Activated naive CD4-positive, alpha-beta T cell treated with anti-CD3 and anti-CD28 coated beads for 36 hours (primary cell): ENCODE measurements at regions of chr12 and their contacts with region 1.

Region 1: GRCh38 chr12:57124259-57124877 is 3.9 kb upstream of the LRP1 start:
- DNase-seq: peak; percentile 90
- H3K4me3 Mint-ChIP-seq: no peak overlapping the region
- H3K27ac Mint-ChIP-seq: no peak overlapping the region
- H3K4me1 Mint-ChIP-seq: peaks cover under 1% of the 10 kb centered on the region
- H3K27me3 Mint-ChIP-seq: no peaks in the 10 kb centered on the region

Region 2: GRCh38 chr12:56751712-56752598 is 372.4 kb before region 1 on chr12 and contains the start of gene PRIM1:
- CTCF ChIA-PET with region 1: no interaction called
- intact Hi-C with region 1: loop called (anchors 1 kb)
- DNase-seq: peak; percentile 90
- H3K4me3 Mint-ChIP-seq: peak within 1 kb of the TSS; percentile 98
- H3K27ac Mint-ChIP-seq: peak within 1 kb of the TSS; percentile 99
- H3K4me1 Mint-ChIP-seq: peaks cover 40% of the 10 kb centered on the region
- H3K27me3 Mint-ChIP-seq: no peaks in the 10 kb centered on the region
- total RNA-seq, gene PRIM1: 74.9 to 75.0 TPM

Region 3: DNA sequence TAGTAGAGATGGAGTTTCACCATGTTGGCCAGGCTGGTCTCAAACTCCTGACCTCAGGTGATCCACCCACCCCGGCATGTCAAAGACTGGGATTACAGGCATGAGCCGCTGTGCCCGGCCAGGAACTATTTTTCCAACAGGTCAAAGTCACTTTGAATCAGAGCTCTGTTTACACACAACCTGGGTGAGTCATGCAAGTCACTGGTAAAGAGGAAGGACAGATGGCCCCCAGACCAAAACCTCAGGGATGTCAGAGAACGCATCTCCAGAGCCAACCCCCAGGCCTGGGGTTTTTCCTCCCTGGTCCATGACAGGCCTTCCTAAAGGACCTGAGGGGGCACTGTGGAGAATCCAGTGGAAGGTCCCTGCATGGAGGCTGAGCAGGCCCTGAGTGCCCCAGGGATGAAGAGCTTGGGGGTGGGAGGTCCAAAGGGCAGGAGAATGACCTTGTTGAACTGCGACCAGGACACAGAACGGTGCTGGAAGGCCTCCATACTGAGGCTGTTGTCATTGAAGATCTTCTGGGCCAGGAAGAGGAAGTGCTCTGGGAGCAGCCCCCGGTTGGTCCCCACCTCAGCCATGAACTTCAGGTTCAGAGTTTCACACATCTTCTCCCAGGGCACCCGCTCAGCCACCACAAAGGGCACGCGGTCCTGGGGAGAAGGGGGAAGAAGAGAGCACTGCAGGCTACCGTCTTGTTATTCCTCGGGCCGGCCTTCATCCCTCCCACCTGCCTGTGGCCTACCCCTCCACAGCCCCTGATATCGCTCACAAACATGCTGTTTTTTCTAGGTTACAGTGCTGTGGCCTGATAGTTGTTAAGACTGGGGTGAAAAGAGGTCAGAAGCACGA is 22.3 kb before region 1 on chr12:
- CTCF ChIA-PET with region 1: interaction called, 10 read pairs
- intact Hi-C with region 1: no loop called
- DNase-seq: no peak
- H3K4me3 Mint-ChIP-seq: no peak overlapping the region
- H3K27ac Mint-ChIP-seq: peak overlapping the region; percentile 71
- H3K4me1 Mint-ChIP-seq: peaks cover 44% of the 10 kb centered on the region
- H3K27me3 Mint-ChIP-seq: no peaks in the 10 kb centered on the region

Region 4: GRCh38 chr12:57166971-57167371 is 42.6 kb after region 1 on chr12:
- CTCF ChIA-PET with region 1: interaction called, 252 read pairs
- intact Hi-C with region 1: loop called (anchors 1 kb)
- DNase-seq: peak; percentile 85
- H3K4me3 Mint-ChIP-seq: no peak overlapping the region
- H3K27ac Mint-ChIP-seq: peak overlapping the region; percentile 62
- H3K4me1 Mint-ChIP-seq: peaks cover 13% of the 10 kb centered on the region
- H3K27me3 Mint-ChIP-seq: no peaks in the 10 kb centered on the region

Region 5: DNA sequence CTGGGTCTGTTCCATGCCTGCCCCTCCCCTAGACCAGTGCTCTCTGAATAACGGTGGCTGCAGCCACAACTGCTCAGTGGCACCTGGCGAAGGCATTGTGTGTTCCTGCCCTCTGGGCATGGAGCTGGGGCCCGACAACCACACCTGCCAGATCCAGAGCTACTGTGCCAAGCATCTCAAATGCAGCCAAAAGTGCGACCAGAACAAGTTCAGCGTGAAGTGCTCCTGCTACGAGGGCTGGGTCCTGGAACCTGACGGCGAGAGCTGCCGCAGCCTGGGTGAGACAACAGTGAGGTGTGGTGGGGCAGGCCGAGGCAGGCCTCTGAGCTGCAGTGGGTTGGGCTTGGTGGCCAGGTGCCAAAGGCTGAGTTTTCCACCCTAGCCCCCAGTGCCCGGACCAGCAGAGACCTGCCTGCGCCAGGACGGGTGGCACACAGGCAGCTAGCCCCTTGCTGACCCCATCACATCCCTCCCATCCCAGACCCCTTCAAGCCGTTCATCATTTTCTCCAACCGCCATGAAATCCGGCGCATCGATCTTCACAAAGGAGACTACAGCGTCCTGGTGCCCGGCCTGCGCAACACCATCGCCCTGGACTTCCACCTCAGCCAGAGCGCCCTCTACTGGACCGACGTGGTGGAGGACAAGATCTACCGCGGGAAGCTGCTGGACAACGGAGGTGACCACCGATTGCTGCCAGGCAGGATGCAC is 51.2 kb after region 1 on chr12:
- CTCF ChIA-PET with region 1: interaction called, 252 read pairs
- intact Hi-C with region 1: loop called (anchors 1 kb)
- DNase-seq: peak; percentile 70
- H3K4me3 Mint-ChIP-seq: peak overlapping the region; percentile 6
- H3K27ac Mint-ChIP-seq: no peak overlapping the region
- H3K4me1 Mint-ChIP-seq: no peaks in the 10 kb centered on the region
- H3K27me3 Mint-ChIP-seq: no peaks in the 10 kb centered on the region

Region 6: DNA sequence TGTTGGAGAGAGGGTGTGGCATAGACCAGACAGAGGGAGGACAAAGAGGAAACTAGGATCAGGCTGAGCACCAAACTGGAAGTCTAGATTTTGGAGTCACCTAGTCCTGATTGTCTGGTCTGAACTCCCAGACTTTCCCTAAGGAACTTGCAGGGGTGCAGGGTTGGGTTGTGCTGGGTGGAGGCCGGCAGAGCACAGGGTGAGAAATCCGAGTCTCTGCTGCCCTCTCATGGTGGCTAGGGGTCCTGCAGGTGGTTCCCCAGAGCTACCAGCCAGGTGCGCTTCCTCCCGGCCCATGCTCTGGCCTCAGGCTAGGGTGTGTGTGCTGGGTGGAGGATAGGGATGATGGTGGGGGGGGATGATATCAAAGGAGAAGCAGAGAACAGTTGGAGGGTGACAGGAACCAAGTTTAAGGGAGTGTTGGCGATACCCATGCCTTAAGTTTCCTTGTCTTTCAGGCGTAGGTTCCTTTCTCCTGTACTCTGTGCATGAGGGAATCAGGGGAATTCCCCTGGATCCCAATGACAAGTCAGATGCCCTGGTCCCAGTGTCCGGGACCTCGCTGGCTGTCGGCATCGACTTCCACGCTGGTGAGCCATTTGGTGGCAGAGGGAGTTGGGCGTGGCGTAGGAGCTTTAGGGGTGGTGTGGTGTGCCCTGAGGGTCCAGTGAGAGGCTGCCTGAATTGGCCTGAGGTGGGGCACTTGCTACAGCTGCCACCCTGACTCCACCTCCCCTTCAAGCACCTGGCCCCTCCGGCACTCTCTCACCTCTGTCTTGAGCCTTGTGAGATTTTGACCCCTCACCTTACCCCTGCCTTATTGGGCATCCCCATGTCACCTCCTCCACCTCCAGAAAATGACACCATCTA is 58.8 kb after region 1 on chr12:
- CTCF ChIA-PET with region 1: interaction called, 125 read pairs
- intact Hi-C with region 1: loop called (anchors 1 kb)
- DNase-seq: peak; percentile 90
- H3K4me3 Mint-ChIP-seq: no peak overlapping the region
- H3K27ac Mint-ChIP-seq: no peak overlapping the region
- H3K4me1 Mint-ChIP-seq: no peaks in the 10 kb centered on the region
- H3K27me3 Mint-ChIP-seq: no peaks in the 10 kb centered on the region

Region 7: DNA sequence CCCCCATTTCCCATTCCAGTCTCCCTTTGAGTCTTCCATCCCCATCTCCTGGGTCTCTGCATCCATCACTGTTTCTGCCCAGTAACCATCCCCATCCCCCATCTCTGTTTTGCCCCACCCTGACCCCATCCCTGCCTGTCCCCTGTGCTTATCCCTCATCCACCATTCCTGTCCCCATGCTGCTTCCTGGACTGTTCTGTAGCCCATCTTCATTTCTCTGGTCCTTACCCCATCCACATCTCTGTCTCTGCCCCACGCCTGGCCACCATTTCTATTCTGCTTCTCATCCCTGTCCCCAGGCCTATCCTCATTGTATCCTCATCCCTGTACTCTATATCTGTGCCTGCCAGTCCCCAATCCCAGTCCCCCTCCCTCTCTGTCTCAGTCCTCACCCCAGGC is 96.4 kb after region 1 on chr12:
- CTCF ChIA-PET with region 1: no interaction called
- intact Hi-C with region 1: no loop called
- DNase-seq: no peak
- H3K4me3 Mint-ChIP-seq: no peak overlapping the region
- H3K27ac Mint-ChIP-seq: no peak overlapping the region
- H3K4me1 Mint-ChIP-seq: peaks cover 35% of the 10 kb centered on the region
- H3K27me3 Mint-ChIP-seq: peaks cover 78% of the 10 kb centered on the region

Region 8: DNA sequence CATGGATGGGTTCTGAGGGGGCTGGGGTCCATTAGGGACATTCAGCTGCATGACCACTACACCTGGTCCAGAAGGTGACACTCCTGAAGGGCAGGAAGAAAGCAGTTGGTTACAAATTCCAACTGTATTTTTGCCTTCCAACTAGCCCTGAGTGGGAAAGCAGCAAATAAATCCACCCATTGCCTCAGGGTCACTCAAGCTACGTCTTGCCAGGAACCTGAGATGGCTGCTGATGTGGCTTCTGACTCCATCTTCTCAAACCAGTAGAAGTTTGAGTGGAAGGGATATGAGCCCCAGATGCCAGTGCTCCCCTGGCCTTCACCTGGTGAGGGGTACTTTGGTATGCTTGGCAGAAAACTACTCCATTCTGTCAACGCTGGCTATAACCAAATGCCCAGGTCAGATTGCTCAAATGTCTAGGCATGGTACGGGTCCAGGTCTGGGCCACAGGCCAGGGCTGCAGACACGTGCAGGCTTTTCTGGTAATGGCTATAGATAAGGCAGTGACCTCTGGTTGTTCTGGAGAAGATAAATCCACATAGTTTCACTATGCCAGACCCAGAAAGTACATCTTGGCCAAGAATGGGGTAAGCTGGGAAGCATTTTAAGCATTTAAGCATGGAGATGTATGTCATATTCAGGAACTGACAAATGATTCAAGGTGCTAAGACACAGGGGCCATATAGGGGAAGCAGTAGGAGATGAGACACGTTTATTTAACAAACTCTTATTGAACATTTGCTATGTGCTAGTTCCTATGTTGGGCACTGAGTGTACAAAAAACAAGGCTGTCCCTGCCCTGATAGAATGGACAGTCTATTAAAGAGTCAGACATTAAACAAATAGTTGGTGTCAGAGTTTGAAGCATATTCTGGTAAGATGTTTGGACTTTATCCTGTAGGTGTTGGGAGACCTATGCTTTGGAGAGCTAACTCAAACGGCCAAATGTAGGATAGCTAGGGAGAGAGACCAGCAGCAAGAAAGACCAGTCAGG is 134.9 kb after region 1 on chr12:
- CTCF ChIA-PET with region 1: no interaction called
- intact Hi-C with region 1: no loop called
- DNase-seq: no peak
- H3K4me3 Mint-ChIP-seq: no peak overlapping the region
- H3K27ac Mint-ChIP-seq: no peak overlapping the region
- H3K4me1 Mint-ChIP-seq: no peaks in the 10 kb centered on the region
- H3K27me3 Mint-ChIP-seq: no peaks in the 10 kb centered on the region